GM12878 (cell line): ENCODE measurements at regions of chr1 and their contacts with region 1.

Region 1: DNA sequence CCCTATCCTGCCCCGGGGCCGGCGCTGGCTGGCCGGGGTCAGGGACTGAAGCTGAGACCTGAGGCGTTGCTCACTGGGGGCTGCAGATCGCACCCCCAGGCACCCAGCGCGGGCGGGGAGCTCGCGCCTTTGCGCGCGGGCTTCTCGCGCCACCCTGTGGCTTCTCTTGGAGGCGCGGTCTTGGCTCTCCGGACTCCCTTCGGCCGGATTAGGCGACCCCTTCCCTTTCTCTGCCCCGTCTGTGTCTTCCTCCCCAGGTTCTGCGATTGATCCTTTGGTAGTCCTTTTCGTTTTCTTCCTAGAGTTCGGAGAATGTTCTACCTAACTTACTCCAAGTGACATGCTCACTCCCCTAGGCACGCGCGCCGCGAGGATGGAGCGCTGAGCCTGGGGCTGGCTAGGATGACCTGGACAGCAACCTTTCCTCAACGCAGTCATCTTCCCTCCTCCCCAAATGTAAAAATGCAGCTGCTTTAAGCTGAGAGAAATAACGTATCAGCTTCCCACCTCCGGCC is 495 bp upstream of the NTRK1 start:
- DNase-seq: no peak
- ATAC-seq: peak; percentile 84
- H3K4me3 ChIP-seq: peak overlapping the region; percentile 53; the same call in 1 of the 2 replicates
- H3K27ac ChIP-seq: no peak overlapping the region
- H3K4me1 ChIP-seq: peaks cover 26% of the 10 kb centered on the region
- H3K27me3 ChIP-seq: peaks cover 8 to 22% of the 10 kb centered on the region in 2 experiments
- CTCF ChIP-seq: peak; percentile 63 to 91 (median 77)
- EP300 ChIP-seq: no peak
- POLR2A ChIP-seq: no peak
- RAD21 ChIP-seq: peak; percentile 80

Region 2: GRCh38 chr1:156705918-156706656 is 154.1 kb before region 1 on chr1:
- CTCF ChIA-PET with region 1: interaction called, 14 read pairs
- POLR2A ChIA-PET with region 1: no interaction called
- RAD21 ChIA-PET with region 1: interaction called, 3 read pairs
- SMC1A ChIA-PET with region 1: no interaction called
- in situ Hi-C with region 1: no loop called
- intact Hi-C with region 1: no loop called
- DNase-seq: no peak
- ATAC-seq: peak; percentile 81
- H3K4me3 ChIP-seq: peak overlapping the region; percentile 35; the same call in 1 of the 2 replicates
- H3K27ac ChIP-seq: no peak overlapping the region
- H3K4me1 ChIP-seq: peaks cover 6% of the 10 kb centered on the region
- H3K27me3 ChIP-seq: peaks cover 10 to 15% of the 10 kb centered on the region in 2 experiments
- CTCF ChIP-seq: peak; percentile 60 to 74 (median 67)
- EP300 ChIP-seq: no peak
- POLR2A ChIP-seq: peak; percentile 11; the same call in 1 of the 2 replicates
- RAD21 ChIP-seq: peak; percentile 53

Region 3: DNA sequence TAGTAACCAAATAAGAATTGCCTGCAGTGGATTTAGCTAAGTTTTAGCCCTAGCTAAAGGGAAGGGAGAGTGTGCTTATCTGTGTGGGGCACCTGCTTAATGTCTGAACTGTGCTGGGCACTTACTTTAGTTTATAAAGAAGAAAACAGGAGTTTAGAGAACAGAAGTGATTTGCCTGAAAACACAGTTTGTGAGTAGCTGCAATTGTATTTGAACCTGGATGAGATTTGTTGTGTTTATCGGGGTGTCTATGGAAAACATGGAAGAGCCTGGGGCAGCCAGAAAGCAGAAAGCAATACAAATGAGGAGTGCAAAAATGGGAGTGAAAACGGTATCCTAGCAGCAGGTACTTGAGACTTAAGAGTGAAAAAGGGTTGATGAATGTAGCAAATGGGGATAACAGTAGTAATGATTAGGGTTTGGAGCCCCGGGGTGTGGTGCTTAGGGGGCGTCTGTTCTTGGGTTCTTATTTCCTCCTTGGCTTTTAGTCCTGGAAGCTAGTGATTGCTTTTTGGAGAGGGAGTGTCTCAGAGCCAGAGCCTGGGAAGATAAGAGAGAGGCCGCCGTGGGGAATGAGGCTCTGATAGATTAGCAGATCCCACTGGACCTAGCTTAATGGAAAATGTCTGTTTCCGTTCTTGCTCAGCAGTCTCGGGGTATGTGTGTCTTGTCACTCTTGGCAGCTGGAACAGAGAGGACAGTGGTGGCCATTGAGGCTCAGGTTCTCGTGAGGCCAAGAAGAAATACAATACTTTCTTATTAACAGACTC is 87.3 kb before region 1 on chr1:
- CTCF ChIA-PET with region 1: interaction called, 18 read pairs
- POLR2A ChIA-PET with region 1: no interaction called
- RAD21 ChIA-PET with region 1: interaction called, 6 read pairs
- SMC1A ChIA-PET with region 1: interaction called, 5 read pairs
- in situ Hi-C with region 1: no loop called
- intact Hi-C with region 1: no loop called
- DNase-seq: no peak
- ATAC-seq: peak; percentile 6; the same call in 2 of the 3 replicates
- H3K4me3 ChIP-seq: peak overlapping the region; percentile 42; the same call in 1 of the 2 replicates
- H3K27ac ChIP-seq: no peak overlapping the region
- H3K4me1 ChIP-seq: no peaks in the 10 kb centered on the region
- H3K27me3 ChIP-seq: no peaks in the 10 kb centered on the region
- CTCF ChIP-seq: no peak
- EP300 ChIP-seq: no peak
- POLR2A ChIP-seq: no peak
- RAD21 ChIP-seq: no peak

Region 4: GRCh38 chr1:156804572-156805243 is 55.5 kb before region 1 on chr1:
- CTCF ChIA-PET with region 1: interaction called, 206 read pairs
- POLR2A ChIA-PET with region 1: no interaction called
- RAD21 ChIA-PET with region 1: interaction called, 115 read pairs
- SMC1A ChIA-PET with region 1: interaction called, 41 read pairs
- in situ Hi-C with region 1: loop called (anchors 5 kb)
- intact Hi-C with region 1: no loop called
- DNase-seq: no peak
- ATAC-seq: peak; percentile 39
- H3K4me3 ChIP-seq: no peak overlapping the region
- H3K27ac ChIP-seq: no peak overlapping the region
- H3K4me1 ChIP-seq: peaks cover 18% of the 10 kb centered on the region
- H3K27me3 ChIP-seq: no peaks in the 10 kb centered on the region
- CTCF ChIP-seq: no peak
- EP300 ChIP-seq: no peak
- POLR2A ChIP-seq: no peak
- RAD21 ChIP-seq: no peak

Region 5: DNA sequence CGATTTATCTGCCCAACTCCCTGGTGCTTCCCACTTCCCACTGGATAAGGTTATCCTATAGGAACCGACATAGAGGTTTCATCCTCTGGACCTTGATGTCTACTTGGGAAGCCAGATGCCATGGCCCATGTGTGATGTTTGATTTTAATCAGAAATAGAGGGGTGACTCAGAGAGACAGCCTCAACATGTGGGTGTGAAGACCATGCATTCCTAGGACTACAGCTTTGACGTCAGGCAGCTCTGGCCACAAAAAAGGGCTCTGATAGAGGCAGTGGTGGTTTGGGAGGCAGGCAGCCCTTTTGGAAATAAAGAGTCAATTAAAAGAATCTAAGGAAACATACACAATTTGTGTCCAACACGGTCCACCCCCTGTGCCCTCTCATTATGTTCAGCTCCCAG is 38.4 kb before region 1 on chr1:
- CTCF ChIA-PET with region 1: interaction called, 14 read pairs
- POLR2A ChIA-PET with region 1: interaction called, 3 read pairs
- RAD21 ChIA-PET with region 1: interaction called, 3 read pairs
- SMC1A ChIA-PET with region 1: interaction called, 3 read pairs
- in situ Hi-C with region 1: no loop called
- intact Hi-C with region 1: no loop called
- DNase-seq: no peak
- ATAC-seq: no peak
- H3K4me3 ChIP-seq: no peak overlapping the region
- H3K27ac ChIP-seq: no peak overlapping the region
- H3K4me1 ChIP-seq: peaks cover 4% of the 10 kb centered on the region
- H3K27me3 ChIP-seq: no peaks in the 10 kb centered on the region
- CTCF ChIP-seq: no peak
- EP300 ChIP-seq: no peak
- POLR2A ChIP-seq: no peak
- RAD21 ChIP-seq: no peak

Region 6: GRCh38 chr1:156838981-156839410 is 21.2 kb before region 1 on chr1:
- CTCF ChIA-PET with region 1: interaction called, 248 read pairs
- POLR2A ChIA-PET with region 1: interaction called, 9 read pairs
- RAD21 ChIA-PET with region 1: interaction called, 113 read pairs
- SMC1A ChIA-PET with region 1: interaction called, 123 read pairs
- in situ Hi-C with region 1: no loop called
- intact Hi-C with region 1: loop called (anchors 1 kb)
- DNase-seq: no peak
- ATAC-seq: peak; percentile 57
- H3K4me3 ChIP-seq: no peak overlapping the region
- H3K27ac ChIP-seq: no peak overlapping the region
- H3K4me1 ChIP-seq: peaks cover 24% of the 10 kb centered on the region
- H3K27me3 ChIP-seq: no peaks in the 10 kb centered on the region; a peak in 1 of 4 replicates
- CTCF ChIP-seq: peak; percentile 80 to 94 (median 91)
- EP300 ChIP-seq: no peak
- POLR2A ChIP-seq: no peak
- RAD21 ChIP-seq: peak; percentile 86